Motor neuron (in vitro differentiated cells): ENCODE measurements at regions of chr2 and their contacts with region 1.

Region 1: DNA sequence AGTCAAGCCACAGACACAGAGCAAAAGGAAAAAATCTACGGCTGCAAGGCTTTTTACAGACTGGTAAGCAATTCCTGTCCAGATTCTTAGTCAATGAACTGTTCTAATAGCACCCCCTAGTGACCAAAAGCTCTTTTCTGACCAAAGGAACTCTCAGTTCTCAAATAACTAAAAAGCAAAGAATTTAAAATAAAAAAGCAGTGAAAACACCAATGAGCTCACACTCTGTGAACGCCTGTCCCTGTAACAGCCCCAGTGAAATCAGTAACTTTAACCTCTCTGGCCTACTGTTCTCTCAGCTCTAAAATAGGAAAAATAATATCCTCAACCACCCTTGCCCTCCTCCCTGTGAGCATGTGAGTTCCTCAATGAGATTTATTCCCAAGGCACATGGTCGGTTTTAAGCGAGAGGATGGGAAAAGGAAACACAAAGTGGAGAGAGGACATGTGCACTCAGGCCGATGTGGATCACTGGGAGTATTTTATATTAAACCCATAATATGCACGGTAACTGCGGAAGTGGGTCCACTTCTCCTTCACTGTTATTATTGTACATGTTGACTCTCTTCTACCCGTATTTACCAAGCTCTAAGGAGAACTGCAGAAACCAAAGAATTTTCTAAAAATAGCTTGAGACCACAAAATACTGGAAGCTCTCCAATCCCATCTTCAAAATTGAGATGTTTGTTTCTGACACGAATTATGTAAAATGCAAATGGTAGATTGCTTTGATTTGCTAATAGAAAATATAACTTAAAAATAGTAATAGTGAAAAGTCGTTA is 128.5 kb downstream of the STK39 start:
- ATAC-seq: peak; percentile 58 to 92 (median 76)
- H3K4me3 ChIP-seq: no peak overlapping the region
- H3K27ac ChIP-seq: no peak overlapping the region
- H3K4me1 ChIP-seq: peaks cover 2 to 3% of the 10 kb centered on the region in 2 donors

Region 2: DNA sequence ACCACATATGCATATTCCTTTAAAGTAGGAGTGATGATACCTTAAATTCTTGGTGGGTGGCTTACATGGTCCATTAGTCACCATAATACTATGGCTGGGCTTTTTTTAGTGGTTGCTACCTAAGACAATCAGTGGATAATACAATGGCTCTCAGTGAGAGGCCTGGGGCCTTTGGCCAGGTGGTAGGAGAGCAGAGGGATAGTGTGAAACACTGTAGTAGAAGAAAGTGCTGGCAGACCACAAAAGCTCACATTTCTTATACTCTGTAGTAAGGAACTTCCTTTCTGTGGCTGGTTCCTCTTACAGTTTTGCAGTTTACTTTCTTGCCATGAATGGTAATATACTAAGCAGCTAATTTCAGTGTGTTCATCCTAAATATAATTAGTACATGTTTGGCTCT is 647.2 kb before region 1 on chr2:
- in situ Hi-C with region 1: no loop called
- ATAC-seq: no peak
- H3K4me3 ChIP-seq: no peak overlapping the region
- H3K27ac ChIP-seq: no peak overlapping the region
- H3K4me1 ChIP-seq: no peaks in the 10 kb centered on the region

Region 3: DNA sequence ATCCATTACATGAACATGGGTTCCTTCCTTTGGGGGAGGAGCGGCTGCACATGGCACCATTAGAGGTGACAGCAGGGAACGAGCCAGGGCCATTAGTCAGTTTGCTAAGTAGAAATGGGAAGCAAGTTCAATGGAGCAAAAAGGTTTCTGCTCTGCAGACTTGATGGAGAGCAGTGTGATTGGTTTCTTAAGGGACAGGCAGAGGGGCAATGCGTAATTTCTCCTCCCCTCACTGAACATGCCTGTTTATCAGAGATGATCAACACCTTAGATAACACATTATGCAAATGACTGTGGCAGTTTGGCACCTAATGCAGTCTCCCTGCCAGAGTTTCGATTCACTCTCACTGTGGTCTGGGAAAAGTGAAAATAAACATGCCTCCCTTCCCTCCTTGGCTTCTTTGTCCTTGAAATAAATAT is 286.0 kb before region 1 on chr2:
- in situ Hi-C with region 1: no loop called
- ATAC-seq: peak in 5 of 8 experiments; percentile 26 to 71 (median 43)
- H3K4me3 ChIP-seq: no peak overlapping the region
- H3K27ac ChIP-seq: peak overlapping the region in 1 of 2 donors; percentile 13
- H3K4me1 ChIP-seq: peaks cover 3 to 10% of the 10 kb centered on the region in 2 donors

Region 4: DNA sequence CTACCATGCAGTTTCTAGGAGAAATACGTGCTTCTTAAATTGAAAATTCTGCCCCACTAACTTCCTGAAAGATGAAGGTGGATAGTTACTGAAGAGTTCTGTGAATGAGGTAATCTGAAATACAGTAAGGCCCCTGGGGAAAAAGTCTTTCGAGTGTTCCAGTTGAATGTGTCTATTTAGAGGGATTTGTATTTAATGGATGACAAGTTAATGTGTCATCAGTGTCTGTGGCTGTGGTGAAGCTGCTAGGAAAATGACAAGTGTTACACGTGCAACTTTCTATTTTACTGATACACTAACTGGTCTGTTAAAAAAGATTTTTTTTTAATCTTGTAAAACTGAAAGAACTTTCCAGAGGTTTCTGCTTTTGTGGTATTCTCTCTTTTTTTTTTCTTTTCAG is 256.1 kb before region 1 on chr2:
- in situ Hi-C with region 1: loop called in 1 of 9 experiments (anchors 25 kb)
- ATAC-seq: peak in 5 of 8 experiments; percentile 91 to 97 (median 95)
- H3K4me3 ChIP-seq: no peak overlapping the region
- H3K27ac ChIP-seq: no peak overlapping the region
- H3K4me1 ChIP-seq: peaks cover 7 to 13% of the 10 kb centered on the region in 2 donors

Region 5: DNA sequence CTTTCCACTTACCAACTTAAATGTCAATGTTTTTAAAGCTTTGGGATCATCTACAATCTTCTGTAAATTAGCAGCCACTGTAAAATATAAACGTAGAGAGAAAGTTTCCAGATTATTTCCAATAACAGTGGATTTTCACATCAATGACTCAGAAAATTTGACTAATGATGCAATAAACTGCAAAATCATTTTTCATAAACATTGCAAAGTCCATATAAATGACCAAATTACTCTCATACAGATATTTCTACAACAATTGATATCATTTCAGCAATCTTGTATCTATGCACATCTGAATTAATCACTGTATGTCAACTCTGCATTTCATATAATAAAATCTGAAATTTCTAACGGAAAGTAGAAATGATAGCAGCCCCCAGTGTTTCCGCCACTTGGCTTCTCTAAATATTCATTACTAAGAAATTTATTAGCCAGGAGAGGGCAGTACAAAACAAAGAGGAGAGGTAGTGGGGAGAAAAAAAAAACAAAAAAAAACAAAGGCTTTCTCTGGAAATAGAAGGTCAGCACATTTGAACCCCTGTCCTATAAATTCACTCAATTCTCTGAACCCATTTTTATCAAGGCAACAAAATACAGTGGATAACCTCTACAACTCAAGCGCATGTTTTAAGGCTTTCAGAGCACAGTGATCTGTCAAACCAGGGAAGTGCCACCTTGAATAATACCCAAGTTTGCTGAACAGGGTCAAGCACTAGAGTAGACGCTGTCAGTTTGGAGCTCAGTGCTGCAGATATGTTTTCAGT is 154.1 kb before region 1 on chr2:
- in situ Hi-C with region 1: loop called in 3 of 9 experiments (anchors 10 to 25 kb)
- ATAC-seq: peak in 5 of 8 experiments; percentile 39 to 69 (median 66)
- H3K4me3 ChIP-seq: no peak overlapping the region
- H3K27ac ChIP-seq: no peak overlapping the region
- H3K4me1 ChIP-seq: peaks cover 18 to 26% of the 10 kb centered on the region in 2 donors

Region 6: GRCh38 chr2:168316073-168316440 is 197.1 kb after region 1 on chr2:
- in situ Hi-C with region 1: no loop called
- ATAC-seq: peak; percentile 12 to 85 (median 69)
- H3K4me3 ChIP-seq: no peak overlapping the region
- H3K27ac ChIP-seq: no peak overlapping the region
- H3K4me1 ChIP-seq: peaks cover 5 to 14% of the 10 kb centered on the region in 2 donors